CD8-positive, alpha-beta T cell (primary cell): ENCODE measurements at regions of chr19 and their contacts with region 1.

Region 1: DNA sequence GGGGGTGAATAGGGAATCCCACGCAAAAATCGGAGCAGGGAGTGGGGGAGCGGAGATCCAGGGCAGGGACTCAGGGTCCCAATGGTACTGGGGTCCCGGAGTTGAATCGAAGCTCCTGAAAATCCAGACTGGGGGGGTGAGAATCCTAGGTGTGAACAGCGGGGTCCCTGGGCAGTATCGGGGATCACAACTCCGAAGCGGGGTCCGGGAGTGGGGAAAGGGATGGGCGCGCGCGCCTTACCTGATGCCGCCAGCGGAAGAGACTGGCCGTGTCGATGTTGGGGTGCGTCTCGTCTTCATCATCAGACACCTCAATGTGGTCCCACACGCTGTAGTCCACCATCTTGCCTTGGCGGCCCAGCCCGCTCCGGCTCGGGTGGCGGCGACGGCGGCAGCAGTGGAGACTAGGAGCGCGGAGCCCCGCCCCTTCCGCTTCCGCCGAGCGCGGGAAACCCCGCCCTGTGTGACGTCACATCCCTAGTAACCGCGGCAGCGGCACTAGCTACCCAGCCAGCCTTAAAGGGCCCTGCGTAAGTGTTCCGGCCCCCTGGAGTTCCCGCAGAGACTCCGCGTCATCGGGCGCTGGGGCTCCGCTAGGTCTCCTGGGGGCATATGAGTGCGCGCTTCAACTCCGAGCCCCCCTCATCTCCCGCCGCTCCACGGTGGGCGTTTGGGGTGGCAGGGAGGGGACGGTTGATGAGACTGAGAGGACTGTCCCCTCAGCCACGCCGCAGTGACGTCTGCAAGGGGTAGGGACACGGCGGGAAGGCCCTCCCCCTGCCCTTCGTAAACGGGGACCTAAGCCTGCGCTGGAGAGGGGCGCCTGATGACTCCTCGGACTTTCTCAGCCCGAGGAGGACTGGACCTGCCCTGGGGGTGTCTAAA is at the start of gene CDC37:
- DNase-seq: peak; percentile 96 to 99 (median 98)
- ATAC-seq: peak; percentile 72
- H3K4me3 ChIP-seq: peak within 1 kb of the TSS; percentile 92 to 99
- H3K4me3 Mint-ChIP-seq: peak within 1 kb of the TSS; percentile 95
- H3K27ac ChIP-seq: peak within 1 kb of the TSS; percentile 93 to 95
- H3K27ac Mint-ChIP-seq: peak within 1 kb of the TSS; percentile 94
- H3K4me1 ChIP-seq: peaks cover 73% of the 10 kb centered on the region
- H3K4me1 Mint-ChIP-seq: peaks cover 67% of the 10 kb centered on the region
- H3K27me3 ChIP-seq: peaks cover 0 to 3% of the 10 kb centered on the region in 2 experiments
- H3K27me3 Mint-ChIP-seq: no peaks in the 10 kb centered on the region
- CTCF ChIP-seq: no peak
- total RNA-seq, gene CDC37: 195 to 196 TPM

Region 2: GRCh38 chr19:10332955-10333757 is 70.2 kb before region 1 on chr19 and contains the start of gene RAVER1:
- CTCF ChIA-PET with region 1: no interaction called
- POLR2A ChIA-PET with region 1: no interaction called
- intact Hi-C with region 1: loop called (anchors 1 kb)
- DNase-seq: peak; percentile 94 to 99 (median 98)
- ATAC-seq: peak; percentile 96
- H3K4me3 ChIP-seq: peak within 1 kb of the TSS; percentile 93 to 97
- H3K4me3 Mint-ChIP-seq: peak within 1 kb of the TSS; percentile 95
- H3K27ac ChIP-seq: peak within 1 kb of the TSS; percentile 76 to 95
- H3K27ac Mint-ChIP-seq: peak within 1 kb of the TSS; percentile 93
- H3K4me1 ChIP-seq: peaks cover 30% of the 10 kb centered on the region
- H3K4me1 Mint-ChIP-seq: peaks cover 35% of the 10 kb centered on the region
- H3K27me3 ChIP-seq: no peaks in the 10 kb centered on the region
- H3K27me3 Mint-ChIP-seq: no peaks in the 10 kb centered on the region
- CTCF ChIP-seq: no peak
- total RNA-seq, gene RAVER1: 33.3 to 33.6 TPM

Region 3: DNA sequence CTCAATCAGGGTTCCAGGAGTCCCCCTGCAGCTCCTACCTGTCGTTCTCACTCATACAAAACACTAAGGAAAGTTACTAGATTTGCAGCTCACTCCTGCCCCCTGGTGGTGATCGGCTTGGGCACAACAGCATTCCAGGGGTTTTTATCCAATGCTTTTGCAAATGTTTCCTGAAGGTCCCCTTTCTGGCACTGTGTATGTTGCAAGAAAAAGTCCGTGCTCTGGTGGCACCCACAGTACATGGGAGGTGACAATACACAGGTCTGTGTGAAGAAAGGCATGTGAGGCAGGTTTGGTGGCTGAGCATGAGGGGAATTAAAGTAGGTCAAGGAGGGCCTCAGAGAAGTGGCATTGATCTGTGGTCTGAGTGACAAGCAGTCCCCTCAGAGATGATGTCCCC is 14.4 kb before region 1 on chr19:
- CTCF ChIA-PET with region 1: interaction called, 22 read pairs
- POLR2A ChIA-PET with region 1: no interaction called
- intact Hi-C with region 1: no loop called
- DNase-seq: peak; percentile 64 to 92 (median 84)
- ATAC-seq: peak; percentile 65
- H3K4me3 ChIP-seq: no peak overlapping the region
- H3K4me3 Mint-ChIP-seq: no peak overlapping the region
- H3K27ac ChIP-seq: no peak overlapping the region
- H3K27ac Mint-ChIP-seq: no peak overlapping the region
- H3K4me1 ChIP-seq: no peaks in the 10 kb centered on the region
- H3K4me1 Mint-ChIP-seq: peaks cover 5% of the 10 kb centered on the region
- H3K27me3 ChIP-seq: no peaks in the 10 kb centered on the region
- H3K27me3 Mint-ChIP-seq: no peaks in the 10 kb centered on the region
- CTCF ChIP-seq: peak; percentile 95

Region 4: GRCh38 chr19:10424011-10424637 is 20.7 kb after region 1 on chr19:
- CTCF ChIA-PET with region 1: interaction called, 620 read pairs
- POLR2A ChIA-PET with region 1: interaction called, 48 read pairs
- intact Hi-C with region 1: loop called in 1 of 2 experiments (anchors 1 kb)
- DNase-seq: peak in 7 of 9 experiments; percentile 54 to 81 (median 72)
- ATAC-seq: peak; percentile 3
- H3K4me3 ChIP-seq: peak overlapping the region; percentile 39 to 57
- H3K4me3 Mint-ChIP-seq: peak overlapping the region; percentile 76
- H3K27ac ChIP-seq: peak overlapping the region; percentile 41 to 53
- H3K27ac Mint-ChIP-seq: peak overlapping the region; percentile 74
- H3K4me1 ChIP-seq: peaks cover 66% of the 10 kb centered on the region
- H3K4me1 Mint-ChIP-seq: peaks cover 65% of the 10 kb centered on the region
- H3K27me3 ChIP-seq: peaks cover 22 to 25% of the 10 kb centered on the region in 2 experiments
- H3K27me3 Mint-ChIP-seq: peaks cover 37% of the 10 kb centered on the region
- CTCF ChIP-seq: peak; percentile 78

Region 5: DNA sequence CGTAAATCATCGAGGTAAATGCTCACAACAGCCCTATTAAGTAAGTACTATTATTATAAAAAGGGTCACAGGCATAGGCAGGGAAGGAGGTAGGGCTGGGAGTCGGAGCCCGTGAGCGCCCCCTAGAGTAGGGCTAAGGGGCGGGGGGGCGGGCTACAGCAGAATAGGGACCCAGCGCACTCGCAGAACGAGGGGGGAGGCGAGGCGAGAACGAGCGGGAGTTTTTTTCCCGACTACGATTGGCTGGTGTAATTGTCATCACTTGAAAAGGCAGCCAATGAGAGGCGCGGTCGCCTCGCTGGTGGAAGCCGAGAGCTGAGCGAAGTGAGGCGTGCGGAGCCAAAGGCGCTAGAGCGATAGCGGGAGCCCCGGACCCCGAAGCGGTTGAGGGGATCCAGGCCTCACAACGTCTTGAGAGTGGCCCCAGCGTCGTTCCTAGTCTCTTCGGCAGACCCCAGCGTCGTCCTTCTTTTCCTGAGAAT is 75.6 kb after region 1 on chr19:
- CTCF ChIA-PET with region 1: interaction called, 6 read pairs
- POLR2A ChIA-PET with region 1: no interaction called
- intact Hi-C with region 1: loop called in 1 of 2 experiments (anchors 1 kb)
- DNase-seq: peak; percentile 75 to 96 (median 88)
- ATAC-seq: peak; percentile 97
- H3K4me3 ChIP-seq: peak overlapping the region; percentile 27 to 28
- H3K4me3 Mint-ChIP-seq: peak overlapping the region; percentile 70
- H3K27ac ChIP-seq: no peak overlapping the region
- H3K27ac Mint-ChIP-seq: no peak overlapping the region
- H3K4me1 ChIP-seq: peaks cover 10% of the 10 kb centered on the region
- H3K4me1 Mint-ChIP-seq: peaks cover 14% of the 10 kb centered on the region
- H3K27me3 ChIP-seq: no peaks in the 10 kb centered on the region
- H3K27me3 Mint-ChIP-seq: no peaks in the 10 kb centered on the region
- CTCF ChIP-seq: peak; percentile 74

Region 6: DNA sequence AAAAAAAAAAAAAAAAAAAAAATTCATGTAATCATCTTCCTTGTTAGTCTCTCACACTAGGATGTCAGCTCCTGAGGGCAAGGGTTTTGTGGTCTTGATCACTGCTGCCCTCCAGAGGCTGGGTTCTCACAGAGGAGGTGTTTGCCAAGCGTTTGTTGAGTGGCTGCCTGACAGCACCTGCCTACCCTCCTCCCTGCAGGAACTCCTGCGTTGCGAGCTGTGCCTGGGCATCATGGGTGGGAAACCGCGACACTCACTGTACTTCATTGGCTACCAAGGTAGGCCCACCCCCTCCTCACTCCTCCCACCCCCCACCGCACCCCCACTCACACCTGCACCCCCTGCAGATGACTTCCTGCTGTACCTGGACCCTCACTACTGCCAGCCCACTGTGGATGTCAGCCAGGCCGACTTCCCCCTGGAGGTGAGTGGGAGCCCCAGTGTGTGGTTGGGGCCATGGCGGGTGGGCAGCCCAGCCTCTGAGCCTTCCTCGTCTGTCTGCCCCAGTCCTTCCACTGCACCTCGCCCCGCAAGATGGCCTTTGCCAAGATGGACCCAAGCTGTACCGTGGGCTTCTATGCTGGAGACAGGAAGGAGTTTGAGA is 148.4 kb after region 1 on chr19:
- CTCF ChIA-PET with region 1: interaction called, 5 read pairs
- POLR2A ChIA-PET with region 1: no interaction called
- intact Hi-C with region 1: loop called in 1 of 2 experiments (anchors 5 kb)
- DNase-seq: peak in 6 of 9 experiments; percentile 45 to 80 (median 58)
- ATAC-seq: no peak
- H3K4me3 ChIP-seq: no peak overlapping the region
- H3K4me3 Mint-ChIP-seq: no peak overlapping the region
- H3K27ac ChIP-seq: peak overlapping the region; percentile 22 to 64
- H3K27ac Mint-ChIP-seq: peak overlapping the region; percentile 92
- H3K4me1 ChIP-seq: peaks cover 70% of the 10 kb centered on the region
- H3K4me1 Mint-ChIP-seq: peaks cover 58% of the 10 kb centered on the region
- H3K27me3 ChIP-seq: no peaks in the 10 kb centered on the region
- H3K27me3 Mint-ChIP-seq: no peaks in the 10 kb centered on the region
- CTCF ChIP-seq: no peak

Region 7: DNA sequence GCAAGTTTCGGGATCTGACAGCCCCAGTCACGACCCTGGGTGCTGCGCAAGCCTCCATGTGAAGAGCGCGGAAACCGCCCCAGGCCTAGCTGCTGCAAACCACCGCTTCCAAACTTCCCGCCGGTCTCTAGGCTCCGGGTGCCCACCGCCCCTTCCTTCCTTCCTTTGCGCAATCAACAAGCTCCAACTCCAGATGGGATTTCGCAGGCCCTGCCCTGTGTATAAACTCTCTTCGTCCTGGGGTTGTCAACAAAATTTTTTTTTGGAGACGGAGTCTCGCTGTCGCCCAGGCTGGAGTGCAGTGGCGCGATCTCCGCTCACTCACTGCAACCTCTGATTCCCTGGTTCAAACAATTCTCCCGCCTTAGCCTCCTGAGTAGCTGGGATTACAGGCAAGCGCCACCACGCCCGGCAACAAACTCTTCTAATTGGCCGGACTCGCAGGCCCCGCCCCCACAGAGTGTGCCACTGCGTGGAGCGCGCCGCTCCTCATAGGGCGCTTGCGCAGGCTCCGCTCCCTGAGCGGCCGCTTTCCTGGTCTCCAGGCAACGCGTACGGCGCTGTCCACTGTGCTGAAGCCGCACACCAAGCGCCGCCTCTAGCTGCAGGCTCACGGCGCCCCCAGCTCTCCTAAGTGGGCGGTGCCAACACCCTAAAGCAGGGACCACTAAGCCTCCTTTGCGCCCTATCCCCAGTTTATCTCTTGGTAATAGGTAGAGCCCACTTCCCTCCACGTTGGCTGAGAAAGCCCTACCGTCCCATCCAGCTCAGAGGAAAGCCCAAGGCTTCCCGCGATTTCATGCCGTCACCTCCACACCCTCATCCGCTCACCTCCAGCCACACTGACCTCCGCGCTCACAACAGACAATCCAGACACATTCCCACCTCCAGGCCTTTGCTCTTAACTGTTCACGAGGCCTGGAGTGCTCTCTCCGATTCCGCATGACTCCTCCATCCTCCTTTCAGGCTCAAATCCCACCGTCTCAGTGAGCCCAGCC is 292.3 kb after region 1 on chr19:
- CTCF ChIA-PET with region 1: no interaction called
- POLR2A ChIA-PET with region 1: no interaction called
- intact Hi-C with region 1: loop called in 1 of 2 experiments (anchors 5 kb)
- DNase-seq: peak; percentile 77 to 94 (median 87)
- ATAC-seq: peak; percentile 97
- H3K4me3 ChIP-seq: peak overlapping the region; percentile 33 to 58
- H3K4me3 Mint-ChIP-seq: peak overlapping the region; percentile 78
- H3K27ac ChIP-seq: no peak overlapping the region
- H3K27ac Mint-ChIP-seq: no peak overlapping the region
- H3K4me1 ChIP-seq: peaks cover 12% of the 10 kb centered on the region
- H3K4me1 Mint-ChIP-seq: peaks cover 17% of the 10 kb centered on the region
- H3K27me3 ChIP-seq: peaks cover 0 to 2% of the 10 kb centered on the region in 2 experiments
- H3K27me3 Mint-ChIP-seq: peaks cover 5% of the 10 kb centered on the region
- CTCF ChIP-seq: no peak